ENCODE measurements at regions of chr3 and their contacts with region 1.

Region 1: DNA sequence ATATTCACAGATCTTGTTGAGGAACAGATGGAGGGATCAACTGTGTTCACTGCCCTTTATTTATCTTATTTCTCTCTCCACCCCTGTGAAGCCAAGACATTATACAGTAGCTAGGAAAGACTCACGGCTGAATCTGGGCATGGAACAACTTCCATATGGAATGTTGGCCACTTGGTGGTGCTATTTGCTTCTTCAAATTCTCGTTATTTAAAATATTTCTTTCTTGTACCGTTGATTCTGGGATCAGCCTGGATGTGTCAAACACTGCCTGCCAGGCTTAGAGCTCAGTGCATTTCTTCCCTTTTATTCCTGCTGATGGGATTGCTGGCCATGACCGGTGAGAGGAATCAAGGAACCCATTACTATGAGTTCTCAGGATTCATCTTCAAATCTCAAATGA is 17.5 kb upstream of the GASK1A start:
- H3K4me3 Mint-ChIP-seq: no peak overlapping the region
- H3K27ac Mint-ChIP-seq: no peak overlapping the region
- H3K4me1 Mint-ChIP-seq: no peaks in the 10 kb centered on the region
- H3K27me3 Mint-ChIP-seq: peaks cover 5% of the 10 kb centered on the region

Region 2: GRCh38 chr3:43071313-43071893 is 109.8 kb after region 1 on chr3:
- intact Hi-C with region 1: loop called (anchors 10 kb)
- H3K4me3 Mint-ChIP-seq: no peak overlapping the region
- H3K27ac Mint-ChIP-seq: no peak overlapping the region
- H3K4me1 Mint-ChIP-seq: no peaks in the 10 kb centered on the region
- H3K27me3 Mint-ChIP-seq: peaks cover 4% of the 10 kb centered on the region

Region 3: GRCh38 chr3:43155464-43156121 is 194.0 kb after region 1 on chr3:
- intact Hi-C with region 1: loop called (anchors 2 kb)
- H3K4me3 Mint-ChIP-seq: no peak overlapping the region
- H3K27ac Mint-ChIP-seq: no peak overlapping the region
- H3K4me1 Mint-ChIP-seq: no peaks in the 10 kb centered on the region
- H3K27me3 Mint-ChIP-seq: peaks cover 26% of the 10 kb centered on the region

Region 4: DNA sequence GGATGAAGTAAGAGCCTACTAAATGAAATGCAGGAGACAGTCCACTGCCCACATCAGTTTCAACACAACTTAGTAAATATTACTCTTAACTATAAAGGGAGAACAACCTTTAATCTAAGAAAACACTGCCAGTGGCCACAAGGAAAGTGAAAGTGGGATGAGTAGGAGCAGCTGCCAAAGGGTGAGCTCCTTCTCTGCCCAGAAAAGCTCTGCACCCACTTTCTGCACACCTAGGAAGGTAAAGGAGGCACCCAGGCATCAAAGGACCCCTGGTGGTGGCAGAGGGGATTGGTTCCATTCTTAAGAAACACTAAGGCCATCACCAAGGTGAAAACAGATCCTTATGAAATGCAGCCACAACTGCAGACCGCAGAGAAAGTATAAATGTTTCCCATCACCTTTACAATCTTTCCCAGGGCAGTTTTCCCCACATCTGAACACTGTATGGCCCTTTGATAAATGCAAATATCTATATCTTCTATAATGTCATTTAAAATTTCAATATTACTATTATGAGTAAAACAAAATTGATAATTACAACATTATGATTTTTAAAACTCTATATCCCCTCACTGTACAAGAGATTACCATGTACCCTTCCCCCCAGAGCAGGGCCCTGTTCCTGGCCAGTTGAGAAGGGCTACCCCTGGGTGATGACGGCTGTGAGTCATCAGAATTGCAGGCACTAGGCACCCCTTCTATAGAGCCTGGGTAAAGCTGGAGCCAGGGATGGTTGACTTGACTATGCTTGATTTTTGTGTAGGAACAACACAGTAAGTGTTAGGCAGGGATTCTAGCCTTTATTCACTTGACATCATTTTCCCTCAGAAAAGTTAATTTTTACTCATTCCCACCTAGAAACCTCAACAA is 416.7 kb after region 1 on chr3:
- intact Hi-C with region 1: loop called (anchors 10 kb)
- H3K4me3 Mint-ChIP-seq: no peak overlapping the region
- H3K27ac Mint-ChIP-seq: no peak overlapping the region
- H3K4me1 Mint-ChIP-seq: no peaks in the 10 kb centered on the region
- H3K27me3 Mint-ChIP-seq: no peaks in the 10 kb centered on the region

Region 5: GRCh38 chr3:43503067-43503728 is 541.6 kb after region 1 on chr3:
- intact Hi-C with region 1: loop called (anchors 5 kb)
- H3K4me3 Mint-ChIP-seq: no peak overlapping the region
- H3K27ac Mint-ChIP-seq: no peak overlapping the region
- H3K4me1 Mint-ChIP-seq: peaks cover 16% of the 10 kb centered on the region
- H3K27me3 Mint-ChIP-seq: no peaks in the 10 kb centered on the region

Measured in dendritic cell treated with granulocyte-macrophage colony-stimulating factor and Interleukin-4, amounts not matched to agents 40 ng/mL and 50 ng/mL, for 4 days (primary cell).